Activated CD4-positive, alpha-beta T cell treated with anti-CD3 and anti-CD28 coated beads for 36 hours (primary cell): ENCODE measurements at regions of chr12 and their contacts with region 1.

Region 1: GRCh38 chr12:25377469-25378177 is 126.9 kb upstream of the KRAS start:
- DNase-seq: peak; percentile 65
- ATAC-seq: peak; percentile 95
- H3K4me3 Mint-ChIP-seq: peak overlapping the region; percentile 2
- H3K27ac Mint-ChIP-seq: peak overlapping the region; percentile 53
- H3K4me1 Mint-ChIP-seq: peaks cover 53% of the 10 kb centered on the region
- H3K27me3 Mint-ChIP-seq: peaks cover 4% of the 10 kb centered on the region

Region 2: DNA sequence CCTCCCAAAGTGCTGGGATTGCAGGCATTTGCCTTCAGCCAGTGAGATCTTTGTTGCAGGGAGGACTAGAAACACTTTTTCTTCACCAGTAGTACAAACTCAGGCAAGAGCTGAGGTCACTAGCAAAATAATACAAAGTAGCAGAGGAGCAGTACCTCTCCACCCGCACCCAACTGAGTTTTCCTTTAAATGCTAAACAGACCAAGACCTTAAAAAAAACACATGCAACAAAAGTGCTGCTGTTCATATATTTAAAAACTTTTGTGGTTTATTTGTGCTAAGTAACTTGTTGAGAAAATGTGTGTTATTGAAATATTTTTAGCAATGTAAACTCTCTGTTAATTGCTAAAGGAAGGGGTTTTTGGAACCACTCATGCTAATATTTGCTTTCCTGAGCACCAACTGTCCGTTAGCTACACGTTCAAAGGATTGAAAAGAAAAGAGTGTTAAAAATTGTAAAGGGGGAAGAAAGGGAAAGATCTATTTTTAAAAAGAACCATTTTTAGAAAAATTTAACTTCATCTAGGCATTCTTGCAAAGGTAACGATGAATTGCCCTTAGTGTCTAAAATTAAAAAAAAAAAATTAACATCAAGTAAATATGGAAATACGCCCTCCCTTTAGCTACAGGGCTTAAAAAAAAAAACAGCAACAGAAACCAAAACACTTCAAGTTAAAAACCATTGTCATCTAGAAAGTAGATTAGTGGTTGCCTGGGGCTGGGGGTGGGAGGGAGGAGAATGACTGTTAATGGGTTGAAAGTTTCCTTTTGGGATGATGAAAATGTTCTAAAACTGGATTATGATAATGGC is 12.9 kb before region 1 on chr12:
- CTCF ChIA-PET with region 1: interaction called, 22 read pairs
- POLR2A ChIA-PET with region 1: interaction called, 5 read pairs
- intact Hi-C with region 1: loop called (anchors 1 kb)
- DNase-seq: peak; percentile 82
- ATAC-seq: peak; percentile 90
- H3K4me3 Mint-ChIP-seq: peak overlapping the region; percentile 31
- H3K27ac Mint-ChIP-seq: no peak overlapping the region
- H3K4me1 Mint-ChIP-seq: peaks cover 16% of the 10 kb centered on the region
- H3K27me3 Mint-ChIP-seq: peaks cover 15% of the 10 kb centered on the region